ENCODE measurements at regions of chr1 and their contacts with region 1.

Region 1: GRCh38 chr1:23800400-23801337 is at the start of gene GALE:
- DNase-seq: peak; percentile 98
- ATAC-seq: peak; percentile 89
- H3K4me3 Mint-ChIP-seq: peak within 1 kb of the TSS; percentile 92
- H3K27ac Mint-ChIP-seq: peak within 1 kb of the TSS; percentile 90
- H3K4me1 Mint-ChIP-seq: peaks cover 13% of the 10 kb centered on the region
- H3K27me3 Mint-ChIP-seq: no peaks in the 10 kb centered on the region
- CTCF ChIP-seq: no peak
- total RNA-seq, gene GALE: 40.7 to 43.6 TPM

Region 2: DNA sequence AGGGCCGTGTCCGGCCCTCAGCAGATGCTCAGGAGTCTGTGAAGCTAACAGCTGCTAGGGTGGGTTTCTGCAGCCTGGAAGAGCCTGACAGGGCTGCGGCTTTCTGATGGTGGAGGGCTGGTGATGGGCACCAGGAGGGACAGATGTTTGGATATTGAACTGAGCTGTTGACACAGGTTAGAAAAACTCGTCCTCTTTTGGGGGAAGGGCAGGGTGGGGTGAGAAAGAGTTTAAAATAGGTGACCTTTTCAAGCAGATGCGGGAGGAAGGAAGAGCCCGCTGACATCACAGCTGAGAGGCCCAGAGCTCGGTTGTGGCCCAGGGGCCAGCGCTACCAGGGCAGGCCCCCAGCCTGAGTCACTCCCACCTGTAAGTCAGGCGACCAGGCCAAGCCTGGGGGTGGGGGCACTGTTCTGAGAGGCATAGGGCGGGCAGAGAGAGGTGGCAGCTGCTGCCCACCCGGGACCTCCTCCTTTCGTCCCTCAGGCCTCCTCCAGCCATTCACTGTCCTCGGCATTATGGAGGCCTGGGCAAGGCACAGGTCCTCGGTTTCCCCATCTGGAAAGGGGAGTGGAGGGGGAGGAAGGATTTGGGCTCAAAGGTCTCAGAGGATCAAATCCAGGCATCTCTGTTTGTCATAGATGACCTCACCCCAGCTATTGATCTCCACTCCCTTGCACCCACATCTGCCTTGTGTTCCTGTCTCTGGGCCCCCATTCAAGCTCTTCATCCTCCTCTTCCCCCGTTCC is 209.0 kb before region 1 on chr1:
- CTCF ChIA-PET with region 1: no interaction called
- POLR2A ChIA-PET with region 1: no interaction called
- intact Hi-C with region 1: no loop called
- DNase-seq: peak; percentile 96
- ATAC-seq: peak; percentile 87
- H3K4me3 Mint-ChIP-seq: peak overlapping the region; percentile 21
- H3K27ac Mint-ChIP-seq: peak overlapping the region; percentile 90
- H3K4me1 Mint-ChIP-seq: peaks cover 79% of the 10 kb centered on the region
- H3K27me3 Mint-ChIP-seq: no peaks in the 10 kb centered on the region
- CTCF ChIP-seq: no peak

Region 3: DNA sequence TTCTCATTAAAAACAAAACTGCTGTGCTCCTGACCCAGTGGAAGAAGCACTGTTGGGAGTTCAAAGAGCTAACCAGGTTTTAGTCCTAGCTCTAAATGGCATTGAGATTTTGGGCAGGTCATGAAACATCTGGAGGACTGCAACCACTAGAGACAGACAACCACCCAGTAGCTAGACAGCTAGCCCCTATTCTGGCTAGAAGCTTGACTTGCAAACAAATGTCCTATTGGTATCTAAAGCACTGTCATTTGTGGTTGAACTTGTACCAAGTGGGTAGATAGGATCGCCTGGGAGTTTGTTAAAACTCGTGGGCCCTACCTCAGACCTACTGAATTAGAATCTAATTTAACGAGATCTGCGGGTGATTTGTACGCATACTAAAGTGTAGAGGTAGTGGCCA is 102.2 kb before region 1 on chr1:
- CTCF ChIA-PET with region 1: no interaction called
- POLR2A ChIA-PET with region 1: no interaction called
- intact Hi-C with region 1: no loop called
- DNase-seq: no peak
- ATAC-seq: no peak
- H3K4me3 Mint-ChIP-seq: no peak overlapping the region
- H3K27ac Mint-ChIP-seq: peak overlapping the region; percentile 71
- H3K4me1 Mint-ChIP-seq: peaks cover 67% of the 10 kb centered on the region
- H3K27me3 Mint-ChIP-seq: no peaks in the 10 kb centered on the region
- CTCF ChIP-seq: no peak

Region 4: GRCh38 chr1:23777979-23778814 is 22.5 kb before region 1 on chr1 and contains the start of gene PITHD1:
- CTCF ChIA-PET with region 1: interaction called, 4 read pairs
- POLR2A ChIA-PET with region 1: interaction called, 168 read pairs
- intact Hi-C with region 1: no loop called
- DNase-seq: peak; percentile 83
- ATAC-seq: peak; percentile 91
- H3K4me3 Mint-ChIP-seq: peak within 1 kb of the TSS; percentile 97
- H3K27ac Mint-ChIP-seq: peak within 1 kb of the TSS; percentile 97
- H3K4me1 Mint-ChIP-seq: peaks cover 47% of the 10 kb centered on the region
- H3K27me3 Mint-ChIP-seq: no peaks in the 10 kb centered on the region
- CTCF ChIP-seq: no peak
- total RNA-seq, gene PITHD1: 65.8 to 65.9 TPM

Region 5: DNA sequence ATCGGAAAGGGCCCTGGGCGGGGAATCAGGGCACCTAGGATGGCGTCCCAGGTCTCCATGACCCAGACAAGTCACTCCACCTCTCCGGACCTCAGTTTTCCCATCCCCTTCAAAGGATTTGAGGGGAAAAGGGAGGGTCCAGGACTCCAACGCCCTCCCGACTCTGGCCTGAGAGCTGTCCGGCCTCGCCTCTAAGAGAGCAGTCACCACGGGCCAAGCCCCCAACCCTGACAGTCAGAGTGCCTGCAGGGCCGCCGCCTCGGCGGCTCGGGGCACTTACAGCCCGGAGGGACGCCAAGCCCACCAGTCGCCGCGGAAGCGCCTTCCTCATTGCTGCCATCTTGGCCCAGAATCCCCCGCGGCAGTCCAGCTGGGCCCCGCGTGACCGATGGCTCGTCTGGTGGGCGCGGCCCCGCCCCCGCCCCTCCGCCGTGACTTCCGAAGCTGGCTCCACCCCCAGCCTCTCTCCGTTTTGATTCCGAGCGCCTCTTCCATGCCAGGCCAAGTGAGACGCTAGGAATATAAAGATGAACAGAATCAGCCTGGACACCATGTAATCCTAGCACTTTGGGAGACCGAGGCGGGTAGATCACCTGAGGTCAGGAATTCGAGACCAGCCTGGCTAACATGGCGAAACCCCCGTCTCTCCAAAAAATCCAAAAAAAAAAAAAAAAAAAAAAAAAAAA is 24.6 kb after region 1 on chr1 and contains the start of gene HMGCL:
- CTCF ChIA-PET with region 1: interaction called, 6 read pairs
- POLR2A ChIA-PET with region 1: interaction called, 10 read pairs
- intact Hi-C with region 1: no loop called
- DNase-seq: peak; percentile 94
- ATAC-seq: peak; percentile 98
- H3K4me3 Mint-ChIP-seq: peak within 1 kb of the TSS; percentile 97
- H3K27ac Mint-ChIP-seq: peak within 1 kb of the TSS; percentile 96
- H3K4me1 Mint-ChIP-seq: peaks cover 20% of the 10 kb centered on the region
- H3K27me3 Mint-ChIP-seq: no peaks in the 10 kb centered on the region
- CTCF ChIP-seq: no peak
- total RNA-seq, gene HMGCL: 44.9 to 46.0 TPM

Region 6: GRCh38 chr1:23867953-23868556 is 67.4 kb after region 1 on chr1 and contains the start of gene FUCA1:
- CTCF ChIA-PET with region 1: interaction called, 4 read pairs
- POLR2A ChIA-PET with region 1: interaction called, 3 read pairs
- intact Hi-C with region 1: loop called (anchors 5 kb)
- DNase-seq: peak; percentile 96
- ATAC-seq: peak; percentile 98
- H3K4me3 Mint-ChIP-seq: peak within 1 kb of the TSS; percentile 76
- H3K27ac Mint-ChIP-seq: peak within 1 kb of the TSS; percentile 53
- H3K4me1 Mint-ChIP-seq: peaks cover 18% of the 10 kb centered on the region
- H3K27me3 Mint-ChIP-seq: no peaks in the 10 kb centered on the region
- CTCF ChIP-seq: peak; percentile 87
- total RNA-seq, gene FUCA1: 4.6 to 4.8 TPM

Region 7: GRCh38 chr1:23916209-23917131 is 115.8 kb after region 1 on chr1:
- CTCF ChIA-PET with region 1: interaction called, 13 read pairs
- POLR2A ChIA-PET with region 1: no interaction called
- intact Hi-C with region 1: no loop called
- DNase-seq: peak; percentile 83
- ATAC-seq: peak; percentile 94
- H3K4me3 Mint-ChIP-seq: no peak overlapping the region
- H3K27ac Mint-ChIP-seq: no peak overlapping the region
- H3K4me1 Mint-ChIP-seq: peaks cover 26% of the 10 kb centered on the region
- H3K27me3 Mint-ChIP-seq: no peaks in the 10 kb centered on the region
- CTCF ChIP-seq: peak; percentile 82

Measured in activated CD8-positive, alpha-beta T cell treated with anti-CD3 and anti-CD28 coated beads for 36 hours (primary cell).